ENCODE measurements at regions of chr2 and their contacts with region 1.

Region 1: GRCh38 chr2:197399887-197400540 is 34.8 kb downstream of the SF3B1 start:
- DNase-seq: no peak
- ATAC-seq: no peak
- H3K4me3 Mint-ChIP-seq: no peak overlapping the region
- H3K27ac Mint-ChIP-seq: no peak overlapping the region
- H3K4me1 Mint-ChIP-seq: no peaks in the 10 kb centered on the region
- H3K27me3 Mint-ChIP-seq: no peaks in the 10 kb centered on the region
- CTCF ChIP-seq: no peak

Region 2: GRCh38 chr2:197383823-197384222 is 16.2 kb before region 1 on chr2:
- CTCF ChIA-PET with region 1: no interaction called
- POLR2A ChIA-PET with region 1: no interaction called
- intact Hi-C with region 1: no loop called
- DNase-seq: no peak
- ATAC-seq: no peak
- H3K4me3 Mint-ChIP-seq: no peak overlapping the region
- H3K27ac Mint-ChIP-seq: no peak overlapping the region
- H3K4me1 Mint-ChIP-seq: no peaks in the 10 kb centered on the region
- H3K27me3 Mint-ChIP-seq: no peaks in the 10 kb centered on the region
- CTCF ChIP-seq: no peak

Region 3: GRCh38 chr2:197425550-197425949 is 25.5 kb after region 1 on chr2:
- CTCF ChIA-PET with region 1: no interaction called
- POLR2A ChIA-PET with region 1: no interaction called
- intact Hi-C with region 1: loop called (anchors 2 kb)
- DNase-seq: no peak
- ATAC-seq: no peak
- H3K4me3 Mint-ChIP-seq: no peak overlapping the region
- H3K27ac Mint-ChIP-seq: no peak overlapping the region
- H3K4me1 Mint-ChIP-seq: peaks cover 57% of the 10 kb centered on the region
- H3K27me3 Mint-ChIP-seq: no peaks in the 10 kb centered on the region
- CTCF ChIP-seq: no peak

Region 4: DNA sequence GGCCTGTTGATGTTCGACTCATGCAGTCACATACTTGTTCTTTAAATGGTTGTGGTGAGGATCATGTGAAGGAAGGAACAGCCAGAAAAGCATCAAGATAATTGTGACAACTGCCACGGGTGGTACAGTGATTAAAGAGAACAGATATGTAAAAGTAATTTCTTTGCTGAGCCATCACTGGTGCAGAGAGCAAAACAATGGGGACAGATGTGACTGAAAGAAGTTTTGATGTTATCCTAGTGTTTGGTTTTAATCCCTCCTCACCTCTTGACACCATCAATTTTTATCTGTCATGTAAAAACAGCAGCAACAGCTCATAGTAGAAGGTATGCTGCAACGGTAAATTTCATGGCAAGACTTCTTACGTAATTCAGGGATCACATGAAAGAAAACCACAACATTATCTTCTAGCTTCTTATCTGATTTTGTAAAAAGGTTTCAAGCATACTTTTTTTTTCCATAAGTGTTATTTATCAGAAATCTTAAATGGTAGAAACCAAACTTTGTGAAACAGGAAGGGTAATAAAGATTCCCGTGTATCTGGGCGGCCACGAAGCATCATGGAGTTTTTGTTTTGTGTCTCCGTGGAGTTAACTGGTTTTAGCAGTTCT is 469.6 kb after region 1 on chr2:
- CTCF ChIA-PET with region 1: no interaction called
- POLR2A ChIA-PET with region 1: no interaction called
- intact Hi-C with region 1: no loop called
- DNase-seq: no peak
- ATAC-seq: no peak
- H3K4me3 Mint-ChIP-seq: no peak overlapping the region
- H3K27ac Mint-ChIP-seq: no peak overlapping the region
- H3K4me1 Mint-ChIP-seq: no peaks in the 10 kb centered on the region
- H3K27me3 Mint-ChIP-seq: no peaks in the 10 kb centered on the region
- CTCF ChIP-seq: no peak

Measured in activated B cell treated with CpG ODN at 0.5 μM for 24 hours (primary cell).